Spleen (tissue), 13 donors: ENCODE measurements at regions of chr20 and their contacts with region 1.

Region 1: GRCh38 chr20:63657937-63658748 is at the start of gene RTEL1:
- DNase-seq: peak; percentile 97
- H3K4me3 ChIP-seq: peak within 1 kb of the TSS; percentile 73 to 95 (median 78)
- H3K27ac ChIP-seq: peak within 1 kb of the TSS; percentile 81 to 95 (median 88)
- H3K4me1 ChIP-seq: peaks cover 16 to 60% (median 42%) of the 10 kb centered on the region in 6 donors
- H3K27me3 ChIP-seq: peaks cover 0 to 25% (median 0%) of the 10 kb centered on the region in 7 donors
- CTCF ChIP-seq: peak in 5 of 11 experiments; percentile 13 to 41 (median 27)
- POLR2A ChIP-seq: peak in 1 of 3 donors; percentile 16
- total RNA-seq, gene RTEL1: 36.4 to 49.8 (median 43.2) TPM

Region 2: GRCh38 chr20:63537525-63538203 is 120.5 kb before region 1 on chr20:
- intact Hi-C with region 1: loop called (anchors 10 kb)
- DNase-seq: peak; percentile 98
- H3K4me3 ChIP-seq: peak overlapping the region; percentile 3 to 67 (median 37)
- H3K27ac ChIP-seq: peak overlapping the region; percentile 67 to 89 (median 86)
- H3K4me1 ChIP-seq: peaks cover 17 to 81% (median 61%) of the 10 kb centered on the region in 6 donors
- H3K27me3 ChIP-seq: peaks cover 0 to 16% (median 0%) of the 10 kb centered on the region in 7 donors
- CTCF ChIP-seq: peak; percentile 98 to 100 (median 99)
- POLR2A ChIP-seq: peak in 1 of 3 donors; percentile 44

Region 3: GRCh38 chr20:63612276-63612928 is 45.7 kb before region 1 on chr20:
- intact Hi-C with region 1: no loop called
- DNase-seq: peak; percentile 81
- H3K4me3 ChIP-seq: no peak overlapping the region
- H3K27ac ChIP-seq: peak overlapping the region in 7 of 8 donors; percentile 62 to 83 (median 75)
- H3K4me1 ChIP-seq: peaks cover 0 to 45% (median 24%) of the 10 kb centered on the region in 6 donors
- H3K27me3 ChIP-seq: no peaks in the 10 kb centered on the region
- CTCF ChIP-seq: peak in 2 of 11 experiments; percentile 20 to 24
- POLR2A ChIP-seq: no peak